Naive thymus-derived CD4-positive, alpha-beta T cell (primary cell): ENCODE measurements at regions of chr3 and their contacts with region 1.

Region 1: GRCh38 chr3:67384760-67385397 is 269.5 kb downstream of the SUCLG2 start:
- DNase-seq: peak in 6 of 9 donors; percentile 16 to 47 (median 42)
- ATAC-seq: peak; percentile 55
- H3K4me3 ChIP-seq: no peak overlapping the region
- H3K4me3 Mint-ChIP-seq: no peak overlapping the region
- H3K27ac ChIP-seq: no peak overlapping the region
- H3K27ac Mint-ChIP-seq: peak overlapping the region in 4 of 9 donors; percentile 0 to 19 (median 14)
- H3K4me1 ChIP-seq: no peaks in the 10 kb centered on the region
- H3K4me1 Mint-ChIP-seq: peaks cover 7 to 34% (median 18%) of the 10 kb centered on the region in 7 donors
- H3K27me3 ChIP-seq: no peaks in the 10 kb centered on the region
- H3K27me3 Mint-ChIP-seq: no peaks in the 10 kb centered on the region

Region 2: DNA sequence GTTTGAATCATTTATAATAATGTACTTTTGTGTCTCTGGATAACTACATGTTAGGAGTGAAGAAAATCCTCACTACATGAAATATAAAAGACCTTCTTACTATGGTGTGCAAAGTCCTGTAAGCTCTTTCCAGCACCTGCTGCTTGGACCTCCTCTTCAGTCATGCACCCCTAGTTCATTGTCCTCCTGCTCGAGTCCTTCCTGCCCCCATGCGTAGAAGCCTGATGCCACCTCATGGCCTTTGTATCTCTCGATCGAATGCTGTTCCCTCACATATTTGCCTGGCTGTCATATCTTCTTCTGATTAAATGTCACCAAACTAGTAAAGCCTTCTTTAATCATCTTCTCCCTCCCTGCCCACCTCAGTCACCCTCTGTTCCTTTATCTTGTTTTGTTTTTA is 319.4 kb after region 1 on chr3:
- CTCF ChIA-PET with region 1: no interaction called
- POLR2A ChIA-PET with region 1: no interaction called
- intact Hi-C with region 1: loop called in 1 of 2 experiments (anchors 5 kb)
- DNase-seq: peak in 2 of 9 donors; percentile 4 to 11
- ATAC-seq: no peak
- H3K4me3 ChIP-seq: no peak overlapping the region
- H3K4me3 Mint-ChIP-seq: no peak overlapping the region
- H3K27ac ChIP-seq: no peak overlapping the region
- H3K27ac Mint-ChIP-seq: peak overlapping the region in 3 of 9 donors; percentile 2 to 57 (median 33)
- H3K4me1 ChIP-seq: no peaks in the 10 kb centered on the region
- H3K4me1 Mint-ChIP-seq: peaks cover 0 to 34% (median 18%) of the 10 kb centered on the region in 7 donors
- H3K27me3 ChIP-seq: no peaks in the 10 kb centered on the region
- H3K27me3 Mint-ChIP-seq: no peaks in the 10 kb centered on the region

Region 3: DNA sequence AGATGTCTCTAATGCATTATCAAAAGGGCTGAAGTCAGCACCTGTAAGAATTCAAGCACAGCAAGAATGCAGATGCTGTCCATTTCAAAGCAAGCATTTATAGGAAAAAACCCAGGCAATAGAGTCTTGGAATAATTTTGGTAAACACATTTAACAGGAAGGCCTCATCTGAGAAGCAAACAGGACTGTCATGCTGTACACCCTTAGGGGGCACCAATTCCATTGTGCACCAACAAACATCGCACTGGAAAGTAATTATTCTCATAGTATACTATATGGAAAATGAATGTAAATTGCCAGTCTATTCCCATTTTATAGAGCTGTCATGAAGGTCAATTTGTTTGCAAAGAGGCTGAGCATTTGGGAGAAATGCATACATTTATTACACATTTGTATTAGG is 516.8 kb after region 1 on chr3:
- CTCF ChIA-PET with region 1: no interaction called
- POLR2A ChIA-PET with region 1: no interaction called
- intact Hi-C with region 1: loop called in 1 of 2 experiments (anchors 5 kb)
- DNase-seq: peak in 5 of 9 donors; percentile 17 to 31 (median 24)
- ATAC-seq: peak; percentile 31
- H3K4me3 ChIP-seq: no peak overlapping the region
- H3K4me3 Mint-ChIP-seq: no peak overlapping the region
- H3K27ac ChIP-seq: no peak overlapping the region
- H3K27ac Mint-ChIP-seq: no peak overlapping the region
- H3K4me1 ChIP-seq: peaks cover 0 to under 1% of the 10 kb centered on the region in 2 donors
- H3K4me1 Mint-ChIP-seq: peaks cover 0 to 19% (median 13%) of the 10 kb centered on the region in 7 donors
- H3K27me3 ChIP-seq: no peaks in the 10 kb centered on the region
- H3K27me3 Mint-ChIP-seq: no peaks in the 10 kb centered on the region

Region 4: DNA sequence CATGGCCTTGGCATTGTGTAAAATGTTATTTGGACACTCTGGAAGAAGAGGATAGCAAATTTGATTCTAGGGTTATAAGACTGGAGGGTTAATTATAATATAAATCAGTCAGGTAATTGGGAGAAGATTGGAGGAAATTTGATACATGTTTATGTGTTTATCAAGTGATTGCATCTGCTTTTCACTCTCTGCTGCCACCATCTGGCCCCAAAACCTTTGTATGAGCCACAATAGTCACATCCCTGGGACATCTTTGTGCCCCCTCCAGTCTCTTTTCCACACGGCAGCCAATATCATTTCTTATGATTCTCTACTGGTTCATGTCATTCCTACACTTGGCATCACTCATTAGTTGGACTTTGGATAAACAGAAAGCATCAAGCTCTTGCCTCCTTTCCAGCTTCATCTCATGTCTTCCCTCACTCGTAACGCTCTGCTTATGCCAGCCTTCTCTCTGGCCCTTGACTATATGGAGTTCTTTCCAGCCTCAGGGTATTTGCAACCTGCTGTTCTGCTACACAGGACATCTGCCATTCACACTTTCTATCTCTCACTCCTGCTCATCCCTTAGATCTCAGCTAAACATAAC is 871.9 kb after region 1 on chr3:
- CTCF ChIA-PET with region 1: no interaction called
- POLR2A ChIA-PET with region 1: no interaction called
- intact Hi-C with region 1: loop called (anchors 2 to 5 kb)
- DNase-seq: peak in 6 of 9 donors; percentile 13 to 31 (median 22)
- ATAC-seq: no peak
- H3K4me3 ChIP-seq: no peak overlapping the region
- H3K4me3 Mint-ChIP-seq: no peak overlapping the region
- H3K27ac ChIP-seq: no peak overlapping the region
- H3K27ac Mint-ChIP-seq: peak overlapping the region in 1 of 9 donors; percentile 29
- H3K4me1 ChIP-seq: peaks cover 0 to 3% of the 10 kb centered on the region in 2 donors
- H3K4me1 Mint-ChIP-seq: peaks cover 0 to 8% (median 4%) of the 10 kb centered on the region in 7 donors
- H3K27me3 ChIP-seq: no peaks in the 10 kb centered on the region
- H3K27me3 Mint-ChIP-seq: no peaks in the 10 kb centered on the region

Region 5: DNA sequence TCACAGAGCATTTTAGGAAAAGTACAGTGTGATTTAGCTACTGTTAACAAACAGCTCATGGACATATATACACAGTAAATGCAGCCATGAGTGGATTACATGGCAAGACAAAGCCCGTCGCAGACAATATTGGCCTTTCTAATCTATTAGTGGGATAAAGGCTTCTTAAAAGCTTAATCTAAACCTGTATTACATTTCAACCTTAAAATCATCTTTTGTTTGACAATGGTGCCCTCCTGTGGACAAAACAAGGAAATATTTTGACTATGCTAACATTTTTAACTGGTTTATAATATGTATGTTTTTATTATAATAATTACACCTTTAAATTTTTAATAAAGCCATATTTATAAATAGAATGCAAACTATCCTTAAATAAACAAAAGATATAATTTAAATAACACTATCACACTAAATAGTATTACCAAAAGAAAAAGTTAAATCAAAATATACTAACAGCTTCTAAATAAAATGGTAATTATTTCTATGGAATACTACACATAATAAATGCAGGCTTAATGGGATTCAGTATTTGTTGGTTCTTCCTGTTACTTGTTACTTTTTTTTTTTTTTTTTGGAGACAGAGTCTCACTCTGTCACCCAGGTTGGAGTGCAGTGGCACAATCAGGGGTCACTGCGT is 1508.8 kb after region 1 on chr3:
- CTCF ChIA-PET with region 1: no interaction called
- POLR2A ChIA-PET with region 1: no interaction called
- intact Hi-C with region 1: loop called (anchors 5 kb)
- DNase-seq: peak in 7 of 9 donors; percentile 3 to 42 (median 24)
- ATAC-seq: no peak
- H3K4me3 ChIP-seq: no peak overlapping the region
- H3K4me3 Mint-ChIP-seq: no peak overlapping the region
- H3K27ac ChIP-seq: no peak overlapping the region
- H3K27ac Mint-ChIP-seq: no peak overlapping the region
- H3K4me1 ChIP-seq: no peaks in the 10 kb centered on the region
- H3K4me1 Mint-ChIP-seq: no peaks in the 10 kb centered on the region
- H3K27me3 ChIP-seq: no peaks in the 10 kb centered on the region
- H3K27me3 Mint-ChIP-seq: peaks cover 5 to 20% (median 6%) of the 10 kb centered on the region in 5 donors